ENCODE measurements at regions of chr21 and their contacts with region 1.

Region 1: GRCh38 chr21:37463083-37463801 is 96.7 kb downstream of the DYRK1A start:
- DNase-seq: peak in 5 of 14 experiments; percentile 24 to 65 (median 54)
- ATAC-seq: peak; percentile 49
- H3K4me3 ChIP-seq: no peak overlapping the region
- H3K4me3 Mint-ChIP-seq: peak overlapping the region; percentile 62
- H3K27ac ChIP-seq: no peak overlapping the region
- H3K27ac Mint-ChIP-seq: peak overlapping the region; percentile 66
- H3K4me1 ChIP-seq: peaks cover 32% of the 10 kb centered on the region
- H3K4me1 Mint-ChIP-seq: peaks cover 95% of the 10 kb centered on the region
- H3K27me3 ChIP-seq: no peaks in the 10 kb centered on the region
- H3K27me3 Mint-ChIP-seq: no peaks in the 10 kb centered on the region
- CTCF ChIP-seq: peak; percentile 53

Region 2: DNA sequence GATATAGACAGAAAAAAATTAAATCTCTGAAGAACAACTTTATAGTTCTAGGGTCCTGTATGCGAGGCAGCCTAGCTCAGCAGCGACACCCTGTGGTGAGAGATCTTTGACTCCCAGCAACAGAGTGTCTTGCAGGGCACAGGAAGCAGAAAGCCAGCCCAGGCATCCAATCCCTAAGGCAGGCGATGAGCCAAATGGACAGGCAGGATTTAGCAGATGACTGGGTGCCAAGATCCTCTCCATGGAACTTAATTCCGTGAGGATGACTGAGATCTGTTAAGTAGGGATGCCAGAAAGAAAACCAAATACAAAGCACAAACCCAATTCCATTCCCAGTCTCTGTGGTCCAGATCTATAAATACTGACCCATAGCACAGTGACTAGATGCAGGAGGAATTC is 535.5 kb before region 1 on chr21:
- CTCF ChIA-PET with region 1: no interaction called
- POLR2A ChIA-PET with region 1: no interaction called
- intact Hi-C with region 1: no loop called
- DNase-seq: peak; percentile 56 to 82 (median 64)
- ATAC-seq: peak; percentile 59
- H3K4me3 ChIP-seq: no peak overlapping the region
- H3K4me3 Mint-ChIP-seq: no peak overlapping the region
- H3K27ac ChIP-seq: no peak overlapping the region
- H3K27ac Mint-ChIP-seq: no peak overlapping the region
- H3K4me1 ChIP-seq: no peaks in the 10 kb centered on the region
- H3K4me1 Mint-ChIP-seq: peaks cover 8% of the 10 kb centered on the region
- H3K27me3 ChIP-seq: no peaks in the 10 kb centered on the region
- H3K27me3 Mint-ChIP-seq: no peaks in the 10 kb centered on the region
- CTCF ChIP-seq: peak; percentile 89

Region 3: DNA sequence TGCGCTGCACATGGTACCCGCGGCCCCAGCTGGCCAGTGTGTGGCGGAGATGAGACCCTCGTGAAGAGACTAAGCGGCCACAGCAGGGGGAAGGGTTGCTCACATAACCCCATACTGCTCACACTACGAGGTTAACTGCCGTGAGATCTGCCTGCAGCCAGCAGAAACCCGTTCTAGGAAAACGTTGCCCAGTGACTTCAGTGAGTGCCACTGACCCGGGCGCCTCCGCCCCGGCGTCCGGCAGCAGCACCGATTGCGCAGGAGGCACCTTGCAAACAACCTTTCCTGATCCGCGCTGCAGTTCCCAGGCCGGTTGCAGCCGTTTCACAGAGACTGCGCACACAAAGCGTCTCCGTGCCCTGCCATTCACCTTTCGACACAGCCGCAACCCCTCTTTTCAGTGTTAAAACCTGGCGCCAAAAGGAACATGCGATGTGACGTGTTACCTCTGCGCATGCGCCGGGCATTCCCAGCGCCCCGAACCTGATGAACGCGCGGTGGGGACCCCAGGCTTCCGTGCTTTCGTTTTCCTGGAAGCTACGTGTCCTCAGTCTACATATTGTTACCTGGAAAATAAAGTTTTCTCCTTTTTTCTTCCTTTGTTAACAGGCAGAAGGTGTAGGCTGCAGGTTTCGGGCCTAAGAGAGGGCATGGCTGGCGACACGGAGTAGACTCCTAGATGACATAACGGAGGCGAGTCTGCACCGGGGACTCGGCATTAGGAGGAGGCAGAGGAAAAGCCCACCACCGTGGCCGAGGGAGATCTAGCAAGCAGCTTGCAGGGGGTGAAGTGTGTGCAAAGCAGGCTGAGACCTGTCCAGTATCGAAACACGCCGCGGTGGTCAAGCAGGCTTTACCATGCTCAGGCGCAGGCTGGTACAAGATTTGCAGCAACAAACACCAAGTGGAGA is 205.0 kb before region 1 on chr21:
- CTCF ChIA-PET with region 1: interaction called, 3 read pairs
- POLR2A ChIA-PET with region 1: no interaction called
- intact Hi-C with region 1: loop called in 1 of 2 experiments (anchors 10 kb)
- DNase-seq: peak; percentile 51 to 91 (median 69)
- ATAC-seq: peak; percentile 85
- H3K4me3 ChIP-seq: peak overlapping the region; percentile 63
- H3K4me3 Mint-ChIP-seq: peak overlapping the region; percentile 84
- H3K27ac ChIP-seq: peak overlapping the region; percentile 44
- H3K27ac Mint-ChIP-seq: peak overlapping the region; percentile 88
- H3K4me1 ChIP-seq: peaks cover 15% of the 10 kb centered on the region
- H3K4me1 Mint-ChIP-seq: peaks cover 45% of the 10 kb centered on the region
- H3K27me3 ChIP-seq: no peaks in the 10 kb centered on the region
- H3K27me3 Mint-ChIP-seq: no peaks in the 10 kb centered on the region
- CTCF ChIP-seq: no peak

Region 4: DNA sequence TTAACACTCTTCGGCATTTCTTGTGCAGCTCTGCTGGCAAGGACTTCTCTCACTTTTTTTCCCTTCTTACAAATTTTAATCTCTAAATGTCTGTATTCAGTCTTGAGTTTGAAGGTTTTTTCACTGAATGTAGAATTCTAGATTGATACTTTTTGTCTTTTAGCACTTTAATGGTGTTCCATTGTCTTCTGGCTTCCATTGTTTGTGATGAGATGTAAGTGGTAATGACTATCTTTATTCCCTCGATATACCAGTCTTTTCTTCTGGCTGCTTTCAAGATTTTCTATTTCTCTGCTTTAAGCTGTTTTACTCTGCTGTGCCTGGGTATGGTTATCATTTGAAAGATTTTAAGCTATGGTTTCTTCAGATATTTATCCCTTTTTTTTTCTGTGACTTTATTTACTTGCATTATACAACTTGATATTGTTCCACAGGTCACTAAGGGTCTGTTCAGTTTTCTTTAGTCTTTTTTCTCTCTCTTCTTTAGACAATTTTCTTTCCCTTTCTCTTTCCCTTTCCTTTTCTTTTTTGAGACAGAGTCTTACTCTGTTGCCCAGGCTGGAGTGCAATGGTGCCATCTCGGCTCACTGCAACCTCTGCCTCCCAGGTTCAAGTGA is 60.9 kb before region 1 on chr21:
- CTCF ChIA-PET with region 1: no interaction called
- POLR2A ChIA-PET with region 1: no interaction called
- intact Hi-C with region 1: loop called in 1 of 2 experiments (anchors 5 kb)
- DNase-seq: no peak
- ATAC-seq: no peak
- H3K4me3 ChIP-seq: no peak overlapping the region
- H3K4me3 Mint-ChIP-seq: no peak overlapping the region
- H3K27ac ChIP-seq: no peak overlapping the region
- H3K27ac Mint-ChIP-seq: no peak overlapping the region
- H3K4me1 ChIP-seq: peaks cover 53% of the 10 kb centered on the region
- H3K4me1 Mint-ChIP-seq: peaks cover 86% of the 10 kb centered on the region
- H3K27me3 ChIP-seq: no peaks in the 10 kb centered on the region
- H3K27me3 Mint-ChIP-seq: no peaks in the 10 kb centered on the region
- CTCF ChIP-seq: no peak

Region 5: GRCh38 chr21:37415939-37416338 is 47.3 kb before region 1 on chr21:
- CTCF ChIA-PET with region 1: no interaction called
- POLR2A ChIA-PET with region 1: interaction called, 3 read pairs
- intact Hi-C with region 1: loop called in 1 of 2 experiments (anchors 5 kb)
- DNase-seq: no peak
- ATAC-seq: no peak
- H3K4me3 ChIP-seq: no peak overlapping the region
- H3K4me3 Mint-ChIP-seq: peak overlapping the region; percentile 17
- H3K27ac ChIP-seq: no peak overlapping the region
- H3K27ac Mint-ChIP-seq: peak overlapping the region; percentile 55
- H3K4me1 ChIP-seq: peaks cover 30% of the 10 kb centered on the region
- H3K4me1 Mint-ChIP-seq: peaks cover 97% of the 10 kb centered on the region
- H3K27me3 ChIP-seq: no peaks in the 10 kb centered on the region
- H3K27me3 Mint-ChIP-seq: no peaks in the 10 kb centered on the region
- CTCF ChIP-seq: no peak

Region 6: GRCh38 chr21:37435120-37435519 is 28.1 kb before region 1 on chr21:
- CTCF ChIA-PET with region 1: no interaction called
- POLR2A ChIA-PET with region 1: interaction called, 6 read pairs
- intact Hi-C with region 1: loop called in 1 of 2 experiments (anchors 2 kb)
- DNase-seq: peak in 9 of 14 experiments; percentile 12 to 85 (median 45)
- ATAC-seq: peak; percentile 99
- H3K4me3 ChIP-seq: no peak overlapping the region
- H3K4me3 Mint-ChIP-seq: no peak overlapping the region
- H3K27ac ChIP-seq: no peak overlapping the region
- H3K27ac Mint-ChIP-seq: no peak overlapping the region
- H3K4me1 ChIP-seq: peaks cover 23% of the 10 kb centered on the region
- H3K4me1 Mint-ChIP-seq: peaks cover 39% of the 10 kb centered on the region
- H3K27me3 ChIP-seq: no peaks in the 10 kb centered on the region
- H3K27me3 Mint-ChIP-seq: no peaks in the 10 kb centered on the region
- CTCF ChIP-seq: no peak

Region 7: DNA sequence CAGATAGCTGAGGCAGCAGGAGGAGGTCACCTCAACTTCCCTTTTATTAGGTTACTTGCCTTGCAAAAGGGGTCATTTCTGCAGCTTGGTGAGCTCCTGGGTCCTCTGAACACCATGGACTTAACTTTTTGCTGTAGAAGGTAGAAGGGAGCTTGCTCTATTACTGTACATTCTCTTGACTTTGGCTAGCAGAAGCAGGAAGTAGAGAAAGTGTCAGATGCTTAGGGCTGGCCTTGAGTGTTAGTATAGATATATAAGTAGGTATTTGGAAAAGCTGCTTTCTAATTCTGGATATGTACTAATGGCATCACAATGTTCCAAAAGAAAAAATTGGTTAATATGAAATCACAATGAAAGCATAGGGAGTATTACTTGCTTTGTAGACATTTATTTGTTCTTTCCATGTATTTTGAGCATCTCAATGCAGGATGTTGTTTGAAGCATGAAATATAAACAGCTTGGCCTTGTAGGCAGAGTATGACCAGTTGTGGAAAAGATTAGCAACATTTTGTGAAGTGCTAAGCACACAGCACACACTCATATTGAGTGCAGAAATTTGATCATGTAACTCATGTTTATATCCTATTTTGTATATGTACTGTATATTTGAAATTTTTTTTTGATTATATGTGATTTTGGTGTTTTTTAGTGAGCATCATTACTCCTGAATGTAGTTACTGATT is 12.1 kb after region 1 on chr21:
- CTCF ChIA-PET with region 1: interaction called, 11 read pairs
- POLR2A ChIA-PET with region 1: interaction called, 8 read pairs
- intact Hi-C with region 1: no loop called
- DNase-seq: no peak
- ATAC-seq: peak; percentile 57
- H3K4me3 ChIP-seq: no peak overlapping the region
- H3K4me3 Mint-ChIP-seq: peak overlapping the region; percentile 5
- H3K27ac ChIP-seq: no peak overlapping the region
- H3K27ac Mint-ChIP-seq: peak overlapping the region; percentile 43
- H3K4me1 ChIP-seq: peaks cover 19% of the 10 kb centered on the region
- H3K4me1 Mint-ChIP-seq: peaks cover 78% of the 10 kb centered on the region
- H3K27me3 ChIP-seq: no peaks in the 10 kb centered on the region
- H3K27me3 Mint-ChIP-seq: no peaks in the 10 kb centered on the region
- CTCF ChIP-seq: no peak

Region 8: GRCh38 chr21:37503848-37504467 is 40.7 kb after region 1 on chr21:
- CTCF ChIA-PET with region 1: no interaction called
- POLR2A ChIA-PET with region 1: no interaction called
- intact Hi-C with region 1: no loop called
- DNase-seq: no peak
- ATAC-seq: no peak
- H3K4me3 ChIP-seq: no peak overlapping the region
- H3K4me3 Mint-ChIP-seq: no peak overlapping the region
- H3K27ac ChIP-seq: no peak overlapping the region
- H3K27ac Mint-ChIP-seq: peak overlapping the region; percentile 63
- H3K4me1 ChIP-seq: no peaks in the 10 kb centered on the region
- H3K4me1 Mint-ChIP-seq: peaks cover 36% of the 10 kb centered on the region
- H3K27me3 ChIP-seq: no peaks in the 10 kb centered on the region
- H3K27me3 Mint-ChIP-seq: no peaks in the 10 kb centered on the region
- CTCF ChIP-seq: no peak

Measured in CD4-positive, alpha-beta T cell (primary cell).